ENCODE measurements at regions of chrX and their contacts with region 1.

Region 1: DNA sequence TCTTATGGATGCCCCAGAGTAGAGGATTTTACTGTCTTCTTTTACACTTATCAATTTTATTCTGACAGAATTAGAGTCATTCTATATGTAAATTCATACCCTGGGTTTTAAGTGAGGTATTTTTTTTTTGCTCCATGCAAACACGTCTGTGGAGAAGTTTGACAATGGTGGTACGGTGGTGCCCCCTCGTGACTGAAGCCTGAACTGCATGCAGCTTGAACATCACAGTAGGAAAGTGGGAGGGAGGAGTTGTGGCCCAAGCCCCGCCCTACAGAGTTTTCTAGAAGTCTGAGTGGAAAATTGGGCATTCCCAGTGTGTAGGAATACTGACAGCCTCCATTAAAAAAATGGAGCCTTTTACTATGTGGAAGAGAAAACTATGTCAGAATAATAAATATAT is 73.3 kb upstream of the RAB40AL start:
- DNase-seq: peak; percentile 73 to 82
- H3K4me3 ChIP-seq: no peak overlapping the region
- H3K4me3 Mint-ChIP-seq: no peak overlapping the region
- H3K27ac Mint-ChIP-seq: no peak overlapping the region
- H3K4me1 ChIP-seq: no peaks in the 10 kb centered on the region
- H3K4me1 Mint-ChIP-seq: no peaks in the 10 kb centered on the region
- H3K27me3 ChIP-seq: no peaks in the 10 kb centered on the region
- H3K27me3 Mint-ChIP-seq: no peaks in the 10 kb centered on the region
- CTCF ChIP-seq: peak; percentile 56 to 67

Region 2: DNA sequence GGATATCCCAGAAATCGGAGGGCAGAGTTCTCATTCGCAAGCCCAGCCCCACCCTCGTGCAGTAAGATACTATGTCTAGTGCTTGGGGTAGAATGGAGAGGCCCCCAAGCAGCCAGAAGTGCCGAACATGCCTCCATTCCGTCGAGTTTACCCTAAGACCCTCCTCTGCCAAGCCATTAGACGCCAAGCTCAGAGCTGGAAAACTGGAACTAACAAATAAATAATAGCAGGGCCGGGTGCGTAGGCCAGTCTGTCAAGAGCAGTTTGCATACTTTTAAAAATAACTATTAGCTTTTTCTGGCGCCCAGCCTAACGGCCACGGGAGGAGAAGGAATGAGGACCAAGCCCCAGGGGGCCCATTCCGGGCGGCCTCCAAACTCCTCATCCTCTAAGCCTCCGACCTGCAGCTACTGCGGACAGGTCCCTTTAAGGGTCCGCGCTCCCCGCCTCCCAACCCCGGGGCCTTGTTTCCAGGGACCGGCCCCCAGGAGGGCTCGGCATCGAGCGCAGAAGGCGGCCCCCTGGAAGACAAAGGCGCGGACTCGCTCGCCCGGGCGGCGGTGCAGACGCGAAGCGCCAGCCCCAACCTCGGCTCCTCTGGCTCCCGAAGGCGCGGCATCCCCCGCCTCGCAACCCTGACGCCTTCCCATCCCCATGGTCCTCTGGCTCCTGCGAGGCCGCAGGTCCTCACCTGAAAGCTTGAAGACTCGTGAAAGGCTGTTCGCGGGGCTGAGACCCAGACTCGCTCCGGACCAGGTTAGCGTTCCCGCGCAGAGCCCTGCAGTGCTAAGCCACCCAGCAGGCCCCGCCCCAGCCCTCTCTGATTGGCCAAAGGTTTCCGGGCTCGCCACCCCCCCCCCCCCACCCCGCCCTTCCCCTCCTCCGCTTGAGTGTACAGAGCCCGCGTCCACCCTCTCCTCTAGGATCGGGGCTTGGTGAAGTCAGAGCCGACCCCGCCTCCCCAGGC is 347.5 kb before region 1 on chrX and contains the start of gene TMSB15A:
- CTCF ChIA-PET with region 1: no interaction called
- POLR2A ChIA-PET with region 1: no interaction called
- intact Hi-C with region 1: loop called (anchors 10 kb)
- DNase-seq: no peak
- H3K4me3 ChIP-seq: no peak within 1 kb of the TSS
- H3K4me3 Mint-ChIP-seq: no peak within 1 kb of the TSS
- H3K27ac Mint-ChIP-seq: no peak within 1 kb of the TSS
- H3K4me1 ChIP-seq: peaks cover 6% of the 10 kb centered on the region; the same call in 1 of the 2 replicates
- H3K4me1 Mint-ChIP-seq: peaks cover 9% of the 10 kb centered on the region
- H3K27me3 ChIP-seq: no peaks in the 10 kb centered on the region
- H3K27me3 Mint-ChIP-seq: no peaks in the 10 kb centered on the region
- CTCF ChIP-seq: no peak
- total RNA-seq, gene TMSB15A: not detected in 2 replicates

Region 3: DNA sequence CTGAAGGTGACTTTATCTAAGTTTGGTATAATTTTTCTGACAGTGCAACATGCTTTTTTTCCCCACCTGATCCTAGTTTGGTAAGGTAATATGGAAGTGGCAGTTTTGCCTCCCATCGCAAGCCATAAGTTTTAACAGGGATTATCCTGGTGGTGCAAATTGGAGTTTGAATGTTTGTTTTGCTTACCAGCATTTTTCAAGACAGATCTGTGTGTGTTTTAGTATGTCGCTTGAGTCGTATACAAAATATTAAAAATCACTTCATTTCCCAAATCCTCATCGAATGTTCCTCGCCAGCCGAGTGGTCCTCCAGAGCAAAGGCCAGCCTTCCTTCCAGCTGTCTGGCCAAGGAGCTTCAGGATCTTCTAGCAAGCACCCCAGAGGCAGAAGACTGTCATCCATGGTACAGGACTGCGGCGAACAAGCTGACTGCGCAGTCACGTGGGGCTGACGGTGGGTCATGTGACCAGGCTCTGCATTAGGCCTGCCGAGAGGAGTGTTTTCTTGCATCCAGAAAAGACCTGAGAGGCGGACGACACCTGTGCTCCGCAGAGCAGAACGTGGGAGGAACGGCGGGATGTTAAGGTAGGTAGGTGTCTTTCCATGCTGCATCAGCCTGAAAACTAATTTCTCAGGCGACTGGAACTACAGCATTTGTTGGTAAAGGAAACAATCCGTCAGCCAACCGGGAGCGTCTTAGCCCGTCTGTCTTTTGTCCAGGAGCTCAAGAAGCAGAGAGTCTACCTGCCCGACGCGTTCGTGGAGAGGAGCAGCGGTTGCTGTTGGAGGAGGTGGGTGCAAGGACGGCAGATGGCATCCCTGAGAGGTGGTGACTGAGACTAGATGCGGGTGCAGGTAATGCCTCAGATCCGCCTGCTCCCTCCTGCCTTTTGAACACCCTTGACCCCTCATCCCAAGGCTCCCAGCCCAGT is 143.2 kb before region 1 on chrX and contains the start of gene GPRASP3:
- CTCF ChIA-PET with region 1: no interaction called
- POLR2A ChIA-PET with region 1: no interaction called
- intact Hi-C with region 1: loop called (anchors 10 kb)
- DNase-seq: peak; percentile 62 to 73
- H3K4me3 ChIP-seq: peak within 1 kb of the TSS; percentile 43
- H3K4me3 Mint-ChIP-seq: peak within 1 kb of the TSS; percentile 79
- H3K27ac Mint-ChIP-seq: peak within 1 kb of the TSS; percentile 37
- H3K4me1 ChIP-seq: no peaks in the 10 kb centered on the region
- H3K4me1 Mint-ChIP-seq: no peaks in the 10 kb centered on the region
- H3K27me3 ChIP-seq: no peaks in the 10 kb centered on the region
- H3K27me3 Mint-ChIP-seq: no peaks in the 10 kb centered on the region
- CTCF ChIP-seq: no peak
- total RNA-seq, gene GPRASP3: 2.6 and 2.8 TPM in 2 replicates

Region 4: GRCh38 chrX:103017542-103017941 is 153.8 kb after region 1 on chrX:
- CTCF ChIA-PET with region 1: no interaction called
- POLR2A ChIA-PET with region 1: no interaction called
- intact Hi-C with region 1: no loop called
- DNase-seq: no peak
- H3K4me3 ChIP-seq: no peak overlapping the region
- H3K4me3 Mint-ChIP-seq: no peak overlapping the region
- H3K27ac Mint-ChIP-seq: no peak overlapping the region
- H3K4me1 ChIP-seq: no peaks in the 10 kb centered on the region
- H3K4me1 Mint-ChIP-seq: no peaks in the 10 kb centered on the region
- H3K27me3 ChIP-seq: no peaks in the 10 kb centered on the region
- H3K27me3 Mint-ChIP-seq: peaks cover 4% of the 10 kb centered on the region
- CTCF ChIP-seq: no peak

Region 5: DNA sequence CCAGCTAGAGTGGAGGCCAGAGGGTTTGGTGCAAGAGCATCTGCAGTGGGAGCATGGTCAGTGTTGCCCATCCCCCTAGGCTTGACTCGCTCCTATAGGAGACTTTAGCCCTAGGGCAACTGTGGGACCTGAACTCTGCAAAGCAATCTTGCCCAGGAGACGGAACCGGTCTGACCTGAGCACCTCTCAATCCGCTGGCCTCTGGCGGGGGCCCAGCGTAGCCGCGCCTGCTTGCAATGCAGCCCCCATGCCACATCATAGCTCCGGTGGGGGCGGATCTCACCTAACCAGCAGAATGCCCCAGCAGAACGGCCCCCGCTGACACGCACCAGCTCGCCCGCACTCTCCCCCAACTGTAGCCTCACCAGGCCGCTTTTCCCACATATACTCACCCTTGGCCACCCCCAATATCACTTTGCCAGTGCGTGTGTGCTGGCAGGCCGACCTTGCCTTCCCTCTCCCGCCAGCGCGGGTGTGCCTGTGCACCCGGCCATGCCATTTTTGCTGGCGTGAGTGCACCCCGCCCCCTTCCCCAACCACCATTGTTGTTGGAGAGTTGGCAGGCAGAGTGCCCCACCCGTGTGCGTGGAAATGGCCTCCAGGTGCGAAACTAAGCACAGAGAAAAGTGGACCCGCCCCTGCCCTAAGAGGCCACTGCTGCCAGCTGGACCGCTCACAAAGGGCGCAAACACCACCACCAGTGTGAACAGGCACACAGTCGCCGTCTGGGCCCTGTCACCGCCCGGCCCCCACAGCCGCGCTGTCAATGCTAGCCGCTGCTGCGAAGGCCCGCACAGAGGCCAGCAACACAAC is 357.0 kb after region 1 on chrX:
- CTCF ChIA-PET with region 1: no interaction called
- POLR2A ChIA-PET with region 1: no interaction called
- intact Hi-C with region 1: no loop called
- DNase-seq: no peak
- H3K4me3 ChIP-seq: no peak overlapping the region
- H3K4me3 Mint-ChIP-seq: no peak overlapping the region
- H3K27ac Mint-ChIP-seq: no peak overlapping the region
- H3K4me1 ChIP-seq: no peaks in the 10 kb centered on the region
- H3K4me1 Mint-ChIP-seq: no peaks in the 10 kb centered on the region
- H3K27me3 ChIP-seq: no peaks in the 10 kb centered on the region
- H3K27me3 Mint-ChIP-seq: peaks cover 11% of the 10 kb centered on the region
- CTCF ChIP-seq: no peak